Activated CD4-positive, alpha-beta T cell treated with anti-CD3 and anti-CD28 coated beads, Interleukin-2, amount 10 ng/mL, durations not matched to agents 24 days and 14 days (primary cell): ENCODE measurements at regions of chr20 and their contacts with region 1.

Region 1: GRCh38 chr20:38805502-38805957 is at the start of gene PPP1R16B:
- DNase-seq: peak; percentile 95
- H3K4me3 Mint-ChIP-seq: peak within 1 kb of the TSS; percentile 92
- H3K27ac Mint-ChIP-seq: peak within 1 kb of the TSS; percentile 96
- H3K4me1 Mint-ChIP-seq: peaks cover 48% of the 10 kb centered on the region
- H3K27me3 Mint-ChIP-seq: no peaks in the 10 kb centered on the region
- total RNA-seq, gene PPP1R16B: 133 TPM in 2 replicates

Region 2: DNA sequence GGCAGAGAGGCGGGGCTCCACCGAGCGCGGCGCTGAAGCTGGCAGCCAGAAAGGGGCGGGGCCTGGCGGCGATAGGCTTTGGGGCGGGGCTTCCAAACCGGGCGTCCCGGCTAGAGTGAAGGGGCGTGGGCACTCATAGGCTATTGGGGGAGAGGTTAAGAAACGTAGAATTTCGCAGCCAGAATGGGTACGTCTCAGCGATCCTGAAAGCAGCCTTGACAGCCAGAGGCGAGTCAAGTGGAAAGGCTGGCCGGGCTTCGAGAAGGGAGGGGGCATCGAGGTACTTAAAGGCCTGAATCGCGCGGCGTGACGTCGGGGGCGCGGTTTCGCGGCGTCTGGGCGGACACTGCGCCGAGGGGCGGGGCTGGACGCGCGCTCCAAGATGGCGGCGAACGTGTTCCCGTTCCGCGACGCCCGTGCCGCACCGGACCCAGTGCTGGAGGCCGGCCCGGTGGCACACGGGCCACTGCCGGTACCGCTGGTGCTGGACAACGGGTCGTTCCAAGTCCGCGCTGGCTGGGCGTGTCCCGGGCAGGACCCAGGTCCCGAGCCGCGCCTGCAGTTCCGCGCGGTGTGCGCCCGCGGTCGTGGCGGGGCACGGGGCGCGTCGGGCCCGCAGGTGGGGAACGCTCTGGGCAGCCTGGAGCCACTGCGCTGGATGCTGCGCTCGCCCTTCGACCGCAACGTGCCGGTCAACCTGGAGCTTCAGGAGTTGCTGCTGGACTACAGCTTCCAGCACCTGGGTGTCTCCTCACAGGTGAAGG is 57.3 kb before region 1 on chr20 and contains the start of gene ACTR5:
- intact Hi-C with region 1: loop called (anchors 2 kb)
- DNase-seq: peak; percentile 99
- H3K4me3 Mint-ChIP-seq: peak within 1 kb of the TSS; percentile 91
- H3K27ac Mint-ChIP-seq: peak within 1 kb of the TSS; percentile 93
- H3K4me1 Mint-ChIP-seq: peaks cover 21% of the 10 kb centered on the region
- H3K27me3 Mint-ChIP-seq: peaks cover 9% of the 10 kb centered on the region
- total RNA-seq, gene ACTR5: 15.2 and 15.8 TPM in 2 replicates

Region 3: DNA sequence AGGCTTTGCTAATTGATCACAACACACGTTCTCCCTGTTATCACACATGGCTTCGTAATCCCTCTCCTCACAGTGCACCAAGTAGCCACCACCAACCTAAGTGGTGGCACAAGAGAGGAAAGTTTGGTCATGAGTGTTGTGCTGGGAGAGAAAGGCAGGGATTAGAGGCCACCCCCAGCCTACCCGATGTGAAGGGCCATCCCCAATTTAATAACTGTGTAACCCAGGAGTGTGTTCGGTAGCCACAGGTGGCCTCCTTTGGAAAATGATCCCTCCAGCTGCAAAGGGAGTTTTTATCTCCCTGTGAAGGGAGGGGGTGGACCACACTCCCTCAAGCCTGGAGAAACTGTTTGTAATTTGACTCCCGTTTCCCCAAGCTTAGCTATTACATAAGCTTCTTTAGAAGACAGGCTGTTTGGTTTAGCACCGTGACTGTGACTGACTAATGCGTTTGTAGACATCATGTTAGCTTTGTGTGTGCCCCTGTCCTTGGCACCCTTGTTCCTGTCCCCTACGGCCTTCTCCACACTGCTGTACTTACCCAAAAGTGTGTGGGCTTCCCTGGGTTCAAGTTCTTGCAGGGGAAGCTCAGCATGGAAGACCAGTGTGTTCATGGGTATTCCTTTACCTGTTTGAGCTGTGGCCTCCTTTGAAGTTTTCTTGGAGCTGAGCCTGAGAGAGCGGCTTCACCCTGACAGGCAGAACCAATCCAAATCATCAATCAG is 20.5 kb after region 1 on chr20:
- intact Hi-C with region 1: loop called (anchors 2 kb)
- DNase-seq: no peak
- H3K4me3 Mint-ChIP-seq: no peak overlapping the region
- H3K27ac Mint-ChIP-seq: peak overlapping the region; percentile 58
- H3K4me1 Mint-ChIP-seq: peaks cover 77% of the 10 kb centered on the region
- H3K27me3 Mint-ChIP-seq: no peaks in the 10 kb centered on the region

Region 4: GRCh38 chr20:38833857-38834164 is 28.3 kb after region 1 on chr20:
- intact Hi-C with region 1: loop called (anchors 2 kb)
- DNase-seq: peak; percentile 69
- H3K4me3 Mint-ChIP-seq: peak overlapping the region; percentile 51
- H3K27ac Mint-ChIP-seq: peak overlapping the region; percentile 75
- H3K4me1 Mint-ChIP-seq: peaks cover 58% of the 10 kb centered on the region
- H3K27me3 Mint-ChIP-seq: no peaks in the 10 kb centered on the region

Region 5: GRCh38 chr20:38842558-38842981 is 37.0 kb after region 1 on chr20:
- intact Hi-C with region 1: loop called (anchors 2 kb)
- DNase-seq: peak; percentile 73
- H3K4me3 Mint-ChIP-seq: peak overlapping the region; percentile 78
- H3K27ac Mint-ChIP-seq: peak overlapping the region; percentile 98
- H3K4me1 Mint-ChIP-seq: peaks cover 65% of the 10 kb centered on the region
- H3K27me3 Mint-ChIP-seq: no peaks in the 10 kb centered on the region